CD4-positive, alpha-beta T cell (primary cell): ENCODE measurements at regions of chr1 and their contacts with region 1.

Region 1: DNA sequence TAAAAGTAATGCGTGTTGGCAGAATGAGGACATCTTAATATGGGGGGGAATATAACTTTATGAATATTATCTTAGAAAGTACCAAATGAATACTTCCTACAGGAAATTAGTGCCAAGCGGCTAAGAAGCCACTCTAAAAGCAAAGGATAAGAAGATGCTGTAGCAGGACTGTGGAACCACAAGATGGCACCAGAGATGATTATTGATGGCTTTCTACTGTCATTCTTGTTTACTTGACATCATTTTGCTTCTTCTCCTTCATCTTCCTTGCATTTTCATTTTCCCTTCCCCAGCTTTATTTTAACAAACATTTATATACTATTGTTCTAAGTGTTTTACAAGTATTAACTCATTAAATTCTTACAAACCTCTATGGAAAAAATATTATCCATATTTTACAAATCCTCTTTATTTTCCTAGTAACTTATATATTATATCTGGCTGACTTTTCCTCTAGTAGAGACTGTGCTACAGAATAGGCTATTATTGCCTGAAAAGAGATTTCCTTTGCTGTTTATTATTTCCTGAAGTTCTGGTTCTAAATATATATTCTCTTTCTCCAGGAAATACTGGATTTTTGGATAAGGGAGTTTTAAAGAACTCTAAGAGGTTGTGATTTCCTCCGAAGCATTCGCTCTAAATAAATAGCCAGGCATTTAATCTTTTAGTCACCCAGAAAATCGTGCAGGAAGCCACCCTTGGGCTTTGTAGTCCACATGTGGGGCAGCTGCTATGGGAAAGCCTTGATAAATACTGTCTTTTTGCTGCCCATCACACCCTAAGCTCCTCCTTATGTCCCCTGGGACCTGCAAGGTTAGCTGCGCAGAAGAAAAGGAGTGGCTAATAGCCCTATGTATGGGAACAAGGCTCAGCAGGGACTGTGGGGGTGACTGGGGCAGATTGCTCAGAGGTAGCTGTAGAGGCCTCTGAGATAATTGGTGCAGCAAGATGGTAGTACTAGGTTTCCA is 69.8 kb downstream of the TPR start:
- DNase-seq: peak in 4 of 14 experiments; percentile 29 to 70 (median 63)
- ATAC-seq: peak; percentile 43
- H3K4me3 ChIP-seq: no peak overlapping the region
- H3K4me3 Mint-ChIP-seq: peak overlapping the region; percentile 9
- H3K27ac ChIP-seq: peak overlapping the region; percentile 35 to 46
- H3K27ac Mint-ChIP-seq: peak overlapping the region; percentile 80
- H3K4me1 ChIP-seq: peaks cover 43% of the 10 kb centered on the region
- H3K4me1 Mint-ChIP-seq: peaks cover 54% of the 10 kb centered on the region
- H3K27me3 ChIP-seq: no peaks in the 10 kb centered on the region
- H3K27me3 Mint-ChIP-seq: no peaks in the 10 kb centered on the region
- CTCF ChIP-seq: peak; percentile 72

Region 2: GRCh38 chr1:186009039-186009737 is 296.1 kb before region 1 on chr1:
- CTCF ChIA-PET with region 1: no interaction called
- POLR2A ChIA-PET with region 1: no interaction called
- intact Hi-C with region 1: no loop called
- DNase-seq: no peak
- ATAC-seq: no peak
- H3K4me3 ChIP-seq: no peak overlapping the region
- H3K4me3 Mint-ChIP-seq: no peak overlapping the region
- H3K27ac ChIP-seq: no peak overlapping the region
- H3K27ac Mint-ChIP-seq: no peak overlapping the region
- H3K4me1 ChIP-seq: no peaks in the 10 kb centered on the region
- H3K4me1 Mint-ChIP-seq: peaks cover 11% of the 10 kb centered on the region
- H3K27me3 ChIP-seq: no peaks in the 10 kb centered on the region
- H3K27me3 Mint-ChIP-seq: no peaks in the 10 kb centered on the region
- CTCF ChIP-seq: no peak

Region 3: GRCh38 chr1:186059312-186059711 is 246.0 kb before region 1 on chr1:
- CTCF ChIA-PET with region 1: no interaction called
- POLR2A ChIA-PET with region 1: no interaction called
- intact Hi-C with region 1: no loop called
- DNase-seq: no peak
- ATAC-seq: no peak
- H3K4me3 ChIP-seq: no peak overlapping the region
- H3K4me3 Mint-ChIP-seq: no peak overlapping the region
- H3K27ac ChIP-seq: no peak overlapping the region
- H3K27ac Mint-ChIP-seq: no peak overlapping the region
- H3K4me1 ChIP-seq: no peaks in the 10 kb centered on the region
- H3K4me1 Mint-ChIP-seq: no peaks in the 10 kb centered on the region
- H3K27me3 ChIP-seq: no peaks in the 10 kb centered on the region
- H3K27me3 Mint-ChIP-seq: peaks cover 4% of the 10 kb centered on the region
- CTCF ChIP-seq: no peak

Region 4: DNA sequence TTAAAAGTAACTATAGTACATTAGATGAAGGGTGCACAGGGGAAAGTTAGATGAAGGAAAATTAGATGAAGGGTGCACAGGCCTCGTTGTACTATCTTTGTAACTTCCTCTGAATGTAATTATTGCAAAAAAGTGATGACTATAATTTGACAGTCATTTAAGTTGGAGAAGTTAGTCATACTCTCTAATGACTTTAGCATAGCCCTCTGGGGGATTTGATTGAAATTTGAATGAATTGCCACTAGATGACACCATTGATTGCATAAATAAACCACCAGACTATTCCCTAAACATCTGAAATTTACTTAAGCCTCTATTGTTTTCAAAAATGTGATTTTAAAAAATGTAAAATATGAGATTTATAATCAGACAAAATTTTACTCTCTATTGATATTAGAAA is 32.8 kb before region 1 on chr1:
- CTCF ChIA-PET with region 1: no interaction called
- POLR2A ChIA-PET with region 1: interaction called, 4 read pairs
- intact Hi-C with region 1: loop called in 1 of 2 experiments (anchors 1 kb)
- DNase-seq: peak in 3 of 14 experiments; percentile 25 to 46 (median 41)
- ATAC-seq: peak; percentile 48
- H3K4me3 ChIP-seq: no peak overlapping the region
- H3K4me3 Mint-ChIP-seq: no peak overlapping the region
- H3K27ac ChIP-seq: no peak overlapping the region
- H3K27ac Mint-ChIP-seq: no peak overlapping the region
- H3K4me1 ChIP-seq: no peaks in the 10 kb centered on the region
- H3K4me1 Mint-ChIP-seq: peaks cover 10% of the 10 kb centered on the region
- H3K27me3 ChIP-seq: no peaks in the 10 kb centered on the region
- H3K27me3 Mint-ChIP-seq: no peaks in the 10 kb centered on the region
- CTCF ChIP-seq: peak; percentile 67

Region 5: GRCh38 chr1:186283374-186283773 is 21.9 kb before region 1 on chr1:
- CTCF ChIA-PET with region 1: no interaction called
- POLR2A ChIA-PET with region 1: interaction called, 40 read pairs
- intact Hi-C with region 1: loop called in 1 of 2 experiments (anchors 2 kb)
- DNase-seq: no peak
- ATAC-seq: no peak
- H3K4me3 ChIP-seq: no peak overlapping the region
- H3K4me3 Mint-ChIP-seq: no peak overlapping the region
- H3K27ac ChIP-seq: no peak overlapping the region
- H3K27ac Mint-ChIP-seq: no peak overlapping the region
- H3K4me1 ChIP-seq: peaks cover 2% of the 10 kb centered on the region
- H3K4me1 Mint-ChIP-seq: peaks cover 25% of the 10 kb centered on the region
- H3K27me3 ChIP-seq: no peaks in the 10 kb centered on the region
- H3K27me3 Mint-ChIP-seq: no peaks in the 10 kb centered on the region
- CTCF ChIP-seq: no peak

Region 6: GRCh38 chr1:186289943-186290545 is 15.2 kb before region 1 on chr1:
- CTCF ChIA-PET with region 1: interaction called, 10 read pairs
- POLR2A ChIA-PET with region 1: interaction called, 40 read pairs
- intact Hi-C with region 1: loop called in 1 of 2 experiments (anchors 2 kb)
- DNase-seq: no peak
- ATAC-seq: no peak
- H3K4me3 ChIP-seq: no peak overlapping the region
- H3K4me3 Mint-ChIP-seq: peak overlapping the region; percentile 5
- H3K27ac ChIP-seq: peak overlapping the region; percentile 40 to 48
- H3K27ac Mint-ChIP-seq: peak overlapping the region; percentile 94
- H3K4me1 ChIP-seq: peaks cover 16% of the 10 kb centered on the region
- H3K4me1 Mint-ChIP-seq: peaks cover 53% of the 10 kb centered on the region
- H3K27me3 ChIP-seq: no peaks in the 10 kb centered on the region
- H3K27me3 Mint-ChIP-seq: no peaks in the 10 kb centered on the region
- CTCF ChIP-seq: no peak

Region 7: GRCh38 chr1:186375088-186375953 is 70.1 kb after region 1 on chr1 and contains the starts of genes ODR4 and TPR:
- CTCF ChIA-PET with region 1: interaction called, 6 read pairs
- POLR2A ChIA-PET with region 1: interaction called, 11 read pairs
- intact Hi-C with region 1: no loop called
- DNase-seq: peak; percentile 89 to 99 (median 94)
- ATAC-seq: peak; percentile 87
- H3K4me3 ChIP-seq: peak within 1 kb of the TSS; percentile 79
- H3K4me3 Mint-ChIP-seq: peak within 1 kb of the TSS; percentile 92
- H3K27ac ChIP-seq: peak within 1 kb of the TSS; percentile 89 to 96
- H3K27ac Mint-ChIP-seq: peak within 1 kb of the TSS; percentile 93
- H3K4me1 ChIP-seq: peaks cover 16% of the 10 kb centered on the region
- H3K4me1 Mint-ChIP-seq: peaks cover 77% of the 10 kb centered on the region
- H3K27me3 ChIP-seq: no peaks in the 10 kb centered on the region
- H3K27me3 Mint-ChIP-seq: no peaks in the 10 kb centered on the region
- CTCF ChIP-seq: peak; percentile 85
- total RNA-seq, gene ODR4: 21.3 to 24.5 TPM
- total RNA-seq, gene TPR: 82.3 to 91.3 TPM

Region 8: DNA sequence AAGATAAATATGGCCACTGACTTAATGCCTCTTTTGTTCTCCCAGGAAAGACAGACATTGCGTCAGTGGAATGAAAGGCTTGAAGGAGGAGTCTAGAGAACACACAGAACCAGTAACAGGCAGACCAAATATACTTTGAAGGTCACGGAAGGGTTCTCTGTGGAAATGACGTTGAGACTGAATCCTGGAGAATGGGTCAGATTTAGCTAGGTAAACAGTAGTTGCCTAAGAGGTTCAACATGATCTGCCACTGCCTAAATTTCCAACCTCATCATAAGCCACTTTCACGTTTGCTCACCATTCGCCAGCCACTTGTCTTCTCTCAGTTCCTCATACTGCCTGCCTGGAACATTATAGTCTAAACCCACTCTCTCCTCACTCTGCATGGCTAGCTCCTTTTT is 544.0 kb after region 1 on chr1:
- CTCF ChIA-PET with region 1: no interaction called
- POLR2A ChIA-PET with region 1: no interaction called
- intact Hi-C with region 1: no loop called
- DNase-seq: peak in 2 of 14 experiments; percentile 26 to 27
- ATAC-seq: no peak
- H3K4me3 ChIP-seq: no peak overlapping the region
- H3K4me3 Mint-ChIP-seq: no peak overlapping the region
- H3K27ac ChIP-seq: no peak overlapping the region
- H3K27ac Mint-ChIP-seq: no peak overlapping the region
- H3K4me1 ChIP-seq: no peaks in the 10 kb centered on the region
- H3K4me1 Mint-ChIP-seq: no peaks in the 10 kb centered on the region
- H3K27me3 ChIP-seq: no peaks in the 10 kb centered on the region
- H3K27me3 Mint-ChIP-seq: no peaks in the 10 kb centered on the region
- CTCF ChIP-seq: no peak